ENCODE measurements at regions of chr2 and their contacts with region 1.

Region 1: DNA sequence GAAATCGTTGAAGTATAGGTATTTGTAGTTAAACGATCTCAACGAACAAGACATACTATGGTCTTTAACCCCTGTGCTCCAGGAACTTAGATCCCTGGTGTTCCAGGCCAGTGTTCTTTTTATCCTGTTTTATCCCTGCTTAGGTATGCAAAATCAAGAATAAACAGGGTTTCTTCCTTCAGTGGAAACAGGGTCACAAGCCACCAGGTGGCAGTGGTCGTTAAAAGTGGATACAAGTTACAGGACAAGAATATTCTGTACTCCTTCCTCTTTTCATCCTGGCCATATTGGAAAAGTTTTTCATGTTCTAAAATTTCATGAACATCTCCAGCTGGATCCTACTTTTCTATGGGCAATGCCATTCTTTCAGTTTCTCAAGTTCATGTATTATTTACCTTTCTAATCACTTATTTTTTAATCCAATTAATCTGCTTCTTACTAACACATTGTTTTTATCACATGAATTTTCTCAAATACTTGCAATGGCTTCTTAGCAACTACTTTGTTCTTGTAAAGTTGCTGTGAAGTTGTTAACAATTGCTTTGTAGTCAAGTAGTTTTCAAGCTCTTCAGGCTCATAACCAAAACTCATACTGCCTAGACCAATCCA is 16.4 kb upstream of the HNMT start:
- DNase-seq: peak; percentile 82
- ATAC-seq: peak; percentile 65 to 80

Region 2: DNA sequence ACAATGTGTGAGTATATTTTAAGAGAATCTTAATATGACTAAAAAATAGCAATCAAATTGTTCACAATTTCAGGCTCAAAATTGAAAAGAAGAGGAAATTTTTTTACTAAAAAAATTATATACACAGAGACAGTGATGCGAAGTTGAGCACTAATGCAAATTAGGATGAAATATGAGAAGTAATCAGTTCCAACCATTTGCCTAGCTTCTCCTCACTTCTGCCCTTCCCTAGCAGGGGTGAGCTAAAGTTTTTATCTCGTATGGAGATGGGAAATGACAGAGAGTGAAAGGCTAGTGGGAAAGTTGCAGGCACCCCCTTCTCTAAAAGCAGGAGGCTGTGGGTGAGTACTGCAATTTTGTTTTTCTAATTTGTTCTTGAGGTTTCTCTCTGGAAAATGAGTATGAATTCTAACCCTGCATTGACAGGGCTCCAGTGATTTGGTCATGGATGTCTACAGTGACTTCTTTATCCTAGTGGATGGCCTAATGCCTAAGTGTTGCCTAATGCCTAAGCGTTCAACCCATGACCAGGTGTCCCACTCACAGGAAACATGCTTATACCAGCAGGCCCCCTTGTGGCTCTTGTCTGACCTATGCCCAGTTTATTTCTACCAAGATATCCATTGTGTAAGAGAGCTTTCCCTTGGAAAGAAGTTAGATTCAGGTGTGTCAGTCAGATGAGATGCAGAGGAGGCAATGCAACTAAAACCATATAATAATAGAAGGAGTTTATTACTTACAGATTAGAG is 61.6 kb before region 1 on chr2:
- intact Hi-C with region 1: no loop called
- DNase-seq: no peak
- ATAC-seq: no peak

Region 3: DNA sequence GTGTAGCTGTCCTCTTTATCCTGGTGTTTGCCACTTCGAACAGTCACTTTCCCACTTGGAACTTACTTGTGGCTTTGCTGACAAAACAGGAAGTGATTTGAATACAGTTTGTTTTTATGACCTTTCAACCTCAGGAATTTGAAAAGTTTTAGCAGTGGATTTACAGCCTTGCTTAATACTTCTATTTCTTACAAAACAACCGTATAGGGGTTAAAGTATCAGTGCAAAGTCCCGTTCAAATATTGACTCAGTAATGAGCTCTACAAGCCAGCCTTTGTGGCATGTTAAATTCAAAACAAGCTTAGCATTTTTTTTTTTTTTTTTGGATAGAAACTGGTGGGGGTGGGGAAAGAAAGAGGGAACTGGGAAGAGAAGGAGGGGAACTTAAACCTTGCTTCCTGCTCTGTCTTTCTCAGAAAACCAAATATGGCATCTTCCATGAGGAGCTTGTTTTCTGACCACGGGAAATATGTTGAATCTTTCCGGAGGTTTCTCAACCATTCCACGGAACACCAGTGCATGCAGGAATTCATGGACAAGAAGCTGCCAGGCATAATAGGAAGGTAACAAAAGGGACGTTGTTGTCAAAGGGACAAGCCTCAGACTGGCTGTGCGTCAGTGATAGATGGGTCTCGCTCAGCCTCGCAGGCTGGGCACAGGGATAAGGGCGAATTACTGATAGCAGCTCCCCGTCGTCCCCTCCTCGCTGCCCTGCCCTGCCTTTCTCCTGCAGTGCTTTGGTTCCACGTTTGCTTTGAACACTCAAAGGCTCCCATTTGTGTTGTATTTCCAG is 16.4 kb after region 1 on chr2 and contains the start of gene HNMT:
- intact Hi-C with region 1: no loop called
- DNase-seq: peak; percentile 39
- ATAC-seq: peak; percentile 67 to 73
- total RNA-seq, gene HNMT: 19.0 to 32.6 TPM

Region 4: DNA sequence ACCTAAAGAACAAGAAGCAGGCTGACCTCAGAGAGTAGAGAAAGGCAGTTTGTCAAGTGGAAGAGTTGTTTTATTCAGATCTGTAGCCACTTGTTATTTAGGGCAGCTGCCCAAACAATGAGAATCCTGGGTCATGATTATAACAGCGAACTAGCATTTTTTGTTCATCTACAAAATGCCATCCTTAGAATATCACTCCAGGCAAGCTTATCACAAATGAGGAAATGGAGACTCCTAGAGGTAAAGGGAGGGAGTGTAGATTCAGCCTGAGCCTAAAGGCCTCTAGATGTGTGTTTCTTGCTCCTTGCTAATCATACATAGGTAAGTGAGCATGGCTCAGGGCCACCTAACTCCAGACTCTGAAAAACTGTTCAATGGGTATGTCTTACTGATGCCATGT is 142.5 kb after region 1 on chr2:
- intact Hi-C with region 1: loop called in 1 of 2 experiments (anchors 5 kb)
- DNase-seq: no peak
- ATAC-seq: peak in 1 of 2 donors; percentile 51

Region 5: GRCh38 chr2:138373993-138374408 is 426.2 kb after region 1 on chr2:
- intact Hi-C with region 1: loop called (anchors 5 to 10 kb)
- DNase-seq: no peak
- ATAC-seq: no peak

Region 6: GRCh38 chr2:138787053-138787666 is 839.3 kb after region 1 on chr2:
- intact Hi-C with region 1: loop called in 1 of 2 experiments (anchors 5 kb)
- DNase-seq: no peak
- ATAC-seq: no peak